ENCODE measurements at regions of chr6 and their contacts with region 1.

Region 1: GRCh38 chr6:31834434-31835198 is 7.1 kb downstream of the HSPA1B start:
- DNase-seq: peak; percentile 72 to 89 (median 78)
- ATAC-seq: peak; percentile 71
- H3K4me3 ChIP-seq: peak overlapping the region; percentile 94
- H3K4me3 Mint-ChIP-seq: peak overlapping the region; percentile 96
- H3K27ac ChIP-seq: peak overlapping the region; percentile 97 to 98
- H3K27ac Mint-ChIP-seq: peak overlapping the region; percentile 98
- H3K4me1 ChIP-seq: peaks cover 66% of the 10 kb centered on the region
- H3K4me1 Mint-ChIP-seq: peaks cover 60% of the 10 kb centered on the region
- H3K27me3 ChIP-seq: no peaks in the 10 kb centered on the region
- H3K27me3 Mint-ChIP-seq: no peaks in the 10 kb centered on the region
- CTCF ChIP-seq: no peak

Region 2: DNA sequence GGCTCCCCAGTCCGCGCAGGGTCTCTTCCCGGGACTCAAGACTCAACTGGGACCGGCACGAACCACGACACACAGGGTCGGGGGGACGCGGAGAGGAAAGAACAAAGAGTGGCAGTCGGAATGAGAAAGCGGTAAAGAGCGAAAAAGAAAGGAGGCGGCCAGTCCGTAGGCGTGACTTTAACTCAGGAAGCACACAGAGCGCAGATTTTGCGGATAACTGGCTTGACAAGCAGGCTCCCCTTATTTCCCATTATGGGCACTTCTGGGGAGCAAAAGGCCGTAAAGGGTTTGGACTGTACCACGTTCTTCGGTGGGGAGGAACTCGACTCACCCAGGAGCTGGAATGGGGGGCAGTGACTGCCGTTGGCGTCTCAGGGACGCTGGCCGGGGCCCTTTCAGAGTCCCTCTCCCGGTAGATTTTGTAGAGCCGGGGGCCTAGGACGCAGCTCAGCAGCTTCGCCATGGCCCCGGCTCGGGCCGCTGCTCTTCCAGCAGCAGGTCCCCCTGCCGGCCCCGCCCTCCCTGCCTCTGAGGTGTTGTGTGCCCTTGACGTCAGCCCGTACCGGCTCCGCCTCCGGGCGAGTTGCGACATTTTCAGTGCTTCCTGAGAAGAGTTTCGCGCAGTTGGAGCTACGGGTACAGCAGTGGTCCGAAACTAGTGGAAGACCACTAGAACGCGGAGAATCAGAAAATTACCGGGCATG is 131.6 kb before region 1 on chr6 and contains the start of gene ABHD16A:
- CTCF ChIA-PET with region 1: interaction called, 5 read pairs
- POLR2A ChIA-PET with region 1: interaction called, 16 read pairs
- intact Hi-C with region 1: no loop called
- DNase-seq: peak; percentile 94 to 99 (median 97)
- ATAC-seq: peak; percentile 91
- H3K4me3 ChIP-seq: peak within 1 kb of the TSS; percentile 67
- H3K4me3 Mint-ChIP-seq: peak within 1 kb of the TSS; percentile 94
- H3K27ac ChIP-seq: peak within 1 kb of the TSS; percentile 95 to 98
- H3K27ac Mint-ChIP-seq: peak within 1 kb of the TSS; percentile 94
- H3K4me1 ChIP-seq: peaks cover 35% of the 10 kb centered on the region
- H3K4me1 Mint-ChIP-seq: peaks cover 33% of the 10 kb centered on the region
- H3K27me3 ChIP-seq: no peaks in the 10 kb centered on the region
- H3K27me3 Mint-ChIP-seq: no peaks in the 10 kb centered on the region
- CTCF ChIP-seq: no peak
- total RNA-seq, gene ABHD16A: 52.3 to 59.3 TPM

Region 3: GRCh38 chr6:31795616-31796298 is 38.9 kb before region 1 on chr6 and contains the start of gene VARS1:
- CTCF ChIA-PET with region 1: interaction called, 8 read pairs
- POLR2A ChIA-PET with region 1: interaction called, 7 read pairs
- intact Hi-C with region 1: loop called in 1 of 2 experiments (anchors 5 kb)
- DNase-seq: peak; percentile 69 to 94 (median 80)
- ATAC-seq: peak; percentile 79
- H3K4me3 ChIP-seq: peak within 1 kb of the TSS; percentile 77
- H3K4me3 Mint-ChIP-seq: peak within 1 kb of the TSS; percentile 97
- H3K27ac ChIP-seq: peak within 1 kb of the TSS; percentile 81 to 90
- H3K27ac Mint-ChIP-seq: peak within 1 kb of the TSS; percentile 54
- H3K4me1 ChIP-seq: peaks cover 49% of the 10 kb centered on the region
- H3K4me1 Mint-ChIP-seq: peaks cover 38% of the 10 kb centered on the region
- H3K27me3 ChIP-seq: no peaks in the 10 kb centered on the region
- H3K27me3 Mint-ChIP-seq: no peaks in the 10 kb centered on the region
- CTCF ChIP-seq: peak; percentile 76
- total RNA-seq, gene VARS1: 43.9 to 44.2 TPM

Region 4: DNA sequence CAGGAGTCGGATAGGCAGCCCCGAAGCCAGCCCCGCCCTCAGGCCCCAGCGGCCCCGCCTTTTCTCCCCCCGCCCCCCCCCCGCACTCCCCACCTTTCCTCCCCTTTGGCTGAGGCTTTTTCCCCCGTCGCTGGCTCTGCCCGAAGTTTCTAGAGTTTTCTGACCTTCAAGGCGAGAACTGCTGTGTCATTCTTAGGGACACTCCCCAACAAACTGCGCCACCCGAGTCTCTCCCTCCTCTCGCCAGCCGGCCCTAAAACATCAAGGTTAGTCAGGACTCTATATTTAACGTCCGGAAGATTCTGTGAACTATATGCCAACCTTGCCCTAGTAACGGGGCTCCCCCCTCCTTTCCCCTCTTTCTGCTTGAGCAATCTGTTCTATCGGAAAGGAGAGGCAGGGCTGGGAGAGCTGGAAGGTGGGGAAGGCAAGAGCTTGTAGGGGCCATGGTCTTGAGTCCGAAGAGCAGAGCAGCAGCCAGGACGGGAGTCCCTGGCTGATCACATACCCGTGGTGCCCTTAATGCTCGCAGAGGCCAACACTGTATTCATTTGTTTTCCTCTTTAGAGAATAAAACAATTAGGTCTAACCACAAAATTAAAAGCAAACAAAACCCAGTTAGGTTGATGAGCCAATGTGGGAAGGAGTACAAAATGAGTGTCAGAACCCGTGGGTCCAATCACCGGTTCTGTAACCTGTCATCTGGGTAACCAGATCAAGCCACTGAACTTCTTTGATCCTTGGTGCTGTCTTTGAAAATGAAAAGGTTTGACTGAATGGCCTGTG is 12.4 kb before region 1 on chr6:
- CTCF ChIA-PET with region 1: interaction called, 10 read pairs
- POLR2A ChIA-PET with region 1: interaction called, 17 read pairs
- intact Hi-C with region 1: no loop called
- DNase-seq: peak in 13 of 14 experiments; percentile 30 to 85 (median 55)
- ATAC-seq: peak; percentile 60
- H3K4me3 ChIP-seq: peak overlapping the region; percentile 63
- H3K4me3 Mint-ChIP-seq: peak overlapping the region; percentile 94
- H3K27ac ChIP-seq: peak overlapping the region; percentile 83 to 84
- H3K27ac Mint-ChIP-seq: peak overlapping the region; percentile 94
- H3K4me1 ChIP-seq: peaks cover 58% of the 10 kb centered on the region
- H3K4me1 Mint-ChIP-seq: peaks cover 62% of the 10 kb centered on the region
- H3K27me3 ChIP-seq: no peaks in the 10 kb centered on the region
- H3K27me3 Mint-ChIP-seq: no peaks in the 10 kb centered on the region
- CTCF ChIP-seq: no peak

Region 5: DNA sequence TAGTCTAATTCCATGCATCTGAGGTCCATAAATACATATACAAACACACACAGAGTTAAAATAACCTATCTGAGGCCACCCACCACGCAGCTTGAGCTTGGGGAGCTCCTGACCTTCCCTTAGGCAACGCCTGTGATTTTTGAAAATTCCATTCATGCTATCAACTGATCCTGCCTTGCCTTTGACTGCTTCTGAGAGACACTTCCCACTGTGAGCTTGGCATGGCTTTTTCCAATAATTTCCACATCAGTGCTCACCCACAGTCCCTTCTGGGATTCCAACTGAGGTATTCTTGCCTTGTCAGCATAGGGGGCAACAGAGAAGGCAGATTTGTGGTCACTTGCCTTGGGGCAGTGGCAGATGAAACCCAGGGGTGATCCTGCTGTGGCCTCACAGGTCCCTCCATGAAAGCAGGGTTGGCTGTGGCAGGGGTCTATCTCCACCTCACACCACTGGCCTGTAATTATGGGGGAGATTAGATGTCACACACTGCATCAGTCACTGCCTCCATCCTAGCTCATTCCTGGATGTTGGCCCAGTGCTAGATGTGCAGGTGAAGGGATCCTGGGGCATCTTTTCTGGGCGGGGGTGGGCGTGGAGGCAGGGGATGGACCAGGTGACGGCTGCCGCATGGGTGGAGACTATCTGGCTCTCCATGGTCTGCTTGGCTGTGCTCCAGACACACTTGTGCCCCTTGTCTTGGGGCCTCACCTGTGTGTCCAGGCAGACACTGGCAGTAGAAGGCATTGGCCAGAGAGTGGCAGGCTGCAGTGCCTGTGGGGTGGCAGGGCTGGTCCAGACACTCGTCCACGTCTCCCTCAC is 369.0 kb after region 1 on chr6:
- CTCF ChIA-PET with region 1: no interaction called
- POLR2A ChIA-PET with region 1: no interaction called
- intact Hi-C with region 1: no loop called
- DNase-seq: peak in 1 of 14 experiments; percentile 8
- ATAC-seq: no peak
- H3K4me3 ChIP-seq: no peak overlapping the region
- H3K4me3 Mint-ChIP-seq: no peak overlapping the region
- H3K27ac ChIP-seq: no peak overlapping the region
- H3K27ac Mint-ChIP-seq: no peak overlapping the region
- H3K4me1 ChIP-seq: no peaks in the 10 kb centered on the region
- H3K4me1 Mint-ChIP-seq: no peaks in the 10 kb centered on the region
- H3K27me3 ChIP-seq: peaks cover 0 to 2% of the 10 kb centered on the region in 2 experiments
- H3K27me3 Mint-ChIP-seq: peaks cover 3% of the 10 kb centered on the region
- CTCF ChIP-seq: no peak